Activated CD8-positive, alpha-beta memory T cell treated with anti-CD3 and anti-CD28 coated beads, Interleukin-2, amount 10 ng/mL, durations not matched to agents 7 days and 5 days (primary cell): ENCODE measurements at regions of chr17 and their contacts with region 1.

Region 1: GRCh38 chr17:82022981-82023374 is at the start of gene LRRC45:
- DNase-seq: peak; percentile 100
- ATAC-seq: peak; percentile 95
- H3K4me3 Mint-ChIP-seq: peak within 1 kb of the TSS; percentile 82
- H3K27ac Mint-ChIP-seq: peak within 1 kb of the TSS; percentile 78
- H3K4me1 Mint-ChIP-seq: peaks cover 32% of the 10 kb centered on the region
- H3K27me3 Mint-ChIP-seq: no peaks in the 10 kb centered on the region
- total RNA-seq, gene LRRC45: 45.4 to 61.6 TPM

Region 2: DNA sequence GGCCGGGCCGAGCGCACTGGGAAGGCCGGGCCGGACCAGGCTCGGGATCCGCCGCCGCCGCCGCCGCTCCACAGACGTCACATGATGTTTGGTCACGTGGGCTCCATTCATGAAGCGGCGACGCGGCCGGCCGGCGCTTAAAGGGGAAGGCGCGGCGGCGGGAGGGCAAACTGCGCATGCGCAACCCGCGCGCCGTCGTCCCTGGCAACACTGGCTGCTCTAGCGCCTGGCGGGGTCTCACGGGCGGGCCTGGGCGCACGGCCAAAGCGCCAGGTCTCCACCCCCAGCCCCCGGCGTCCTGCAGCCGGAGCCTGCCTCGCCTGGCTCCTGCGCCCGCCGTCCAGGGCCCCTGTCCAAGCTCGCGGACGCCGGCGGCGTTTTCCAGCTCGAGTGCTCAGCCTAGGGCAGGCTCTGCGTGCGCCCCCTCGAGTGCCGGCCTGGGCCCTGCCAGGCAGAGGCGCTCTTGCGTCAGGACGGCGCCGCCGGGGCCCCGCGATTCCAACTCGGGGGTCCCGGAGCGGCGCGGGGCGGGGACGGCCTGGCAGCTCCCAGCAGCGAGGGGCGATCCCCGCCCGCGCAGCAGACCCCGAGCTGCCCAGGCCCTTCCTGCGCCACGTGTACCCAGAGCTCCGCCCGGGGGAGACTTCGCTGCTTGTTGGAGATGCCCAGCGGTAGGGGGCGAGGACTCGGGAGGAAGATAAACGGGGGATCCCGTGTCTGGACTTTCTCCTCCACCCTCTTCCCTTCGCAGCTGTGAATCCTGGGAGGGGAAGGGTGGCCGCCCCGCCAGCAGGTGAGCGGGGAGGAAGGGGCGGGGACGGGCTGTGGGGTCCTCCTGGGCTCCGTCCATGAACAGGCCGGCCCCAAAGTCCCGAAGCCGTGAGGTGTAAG is 95.1 kb before region 1 on chr17 and contains the start of gene MAFG:
- CTCF ChIA-PET with region 1: interaction called, 10 read pairs
- DNase-seq: peak; percentile 93
- ATAC-seq: peak; percentile 76
- H3K4me3 Mint-ChIP-seq: peak within 1 kb of the TSS; percentile 79
- H3K27ac Mint-ChIP-seq: peak within 1 kb of the TSS; percentile 85
- H3K4me1 Mint-ChIP-seq: peaks cover 28% of the 10 kb centered on the region
- H3K27me3 Mint-ChIP-seq: peaks cover 2% of the 10 kb centered on the region
- total RNA-seq, gene MAFG: 20.2 to 23.8 TPM

Region 3: GRCh38 chr17:81959362-81960129 is 63.4 kb before region 1 on chr17:
- CTCF ChIA-PET with region 1: interaction called, 181 read pairs
- DNase-seq: peak; percentile 75
- ATAC-seq: peak; percentile 96
- H3K4me3 Mint-ChIP-seq: no peak overlapping the region
- H3K27ac Mint-ChIP-seq: no peak overlapping the region
- H3K4me1 Mint-ChIP-seq: no peaks in the 10 kb centered on the region
- H3K27me3 Mint-ChIP-seq: peaks cover 41% of the 10 kb centered on the region

Region 4: DNA sequence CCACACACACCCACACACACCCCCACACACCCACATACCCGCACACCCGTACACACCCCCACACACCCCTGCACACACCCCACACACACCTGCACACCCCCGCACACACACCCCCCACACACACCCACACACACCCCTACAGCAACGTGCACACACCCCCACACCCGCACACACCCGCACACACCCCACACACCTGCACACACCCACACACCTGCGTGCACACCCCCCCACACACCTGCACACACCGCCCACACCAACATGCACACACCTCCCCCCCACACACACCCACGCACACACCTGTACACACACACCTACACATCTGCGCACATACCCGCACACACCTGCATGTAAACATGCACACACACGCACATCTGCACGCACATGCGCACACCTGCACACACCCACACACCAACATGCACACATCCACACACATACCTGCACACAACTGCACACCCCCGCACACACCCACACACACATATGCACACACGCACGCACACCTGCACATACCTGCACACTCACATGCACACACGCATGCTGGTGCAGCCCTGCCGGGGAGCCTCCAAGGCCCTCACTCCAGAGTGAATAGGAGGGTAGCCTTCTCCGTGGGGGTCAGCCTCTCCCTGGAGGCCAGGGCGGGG is 38.1 kb before region 1 on chr17:
- CTCF ChIA-PET with region 1: interaction called, 10 read pairs
- DNase-seq: no peak
- ATAC-seq: no peak
- H3K4me3 Mint-ChIP-seq: no peak overlapping the region
- H3K27ac Mint-ChIP-seq: no peak overlapping the region
- H3K4me1 Mint-ChIP-seq: peaks cover 13% of the 10 kb centered on the region
- H3K27me3 Mint-ChIP-seq: no peaks in the 10 kb centered on the region

Region 5: GRCh38 chr17:82037113-82037888 is 14.3 kb after region 1 on chr17 and contains the start of gene DCXR:
- CTCF ChIA-PET with region 1: interaction called, 18 read pairs
- DNase-seq: peak; percentile 98
- ATAC-seq: peak; percentile 95
- H3K4me3 Mint-ChIP-seq: peak within 1 kb of the TSS; percentile 74
- H3K27ac Mint-ChIP-seq: peak within 1 kb of the TSS; percentile 91
- H3K4me1 Mint-ChIP-seq: peaks cover 24% of the 10 kb centered on the region
- H3K27me3 Mint-ChIP-seq: no peaks in the 10 kb centered on the region
- total RNA-seq, gene DCXR: 120 to 124 TPM

Region 6: DNA sequence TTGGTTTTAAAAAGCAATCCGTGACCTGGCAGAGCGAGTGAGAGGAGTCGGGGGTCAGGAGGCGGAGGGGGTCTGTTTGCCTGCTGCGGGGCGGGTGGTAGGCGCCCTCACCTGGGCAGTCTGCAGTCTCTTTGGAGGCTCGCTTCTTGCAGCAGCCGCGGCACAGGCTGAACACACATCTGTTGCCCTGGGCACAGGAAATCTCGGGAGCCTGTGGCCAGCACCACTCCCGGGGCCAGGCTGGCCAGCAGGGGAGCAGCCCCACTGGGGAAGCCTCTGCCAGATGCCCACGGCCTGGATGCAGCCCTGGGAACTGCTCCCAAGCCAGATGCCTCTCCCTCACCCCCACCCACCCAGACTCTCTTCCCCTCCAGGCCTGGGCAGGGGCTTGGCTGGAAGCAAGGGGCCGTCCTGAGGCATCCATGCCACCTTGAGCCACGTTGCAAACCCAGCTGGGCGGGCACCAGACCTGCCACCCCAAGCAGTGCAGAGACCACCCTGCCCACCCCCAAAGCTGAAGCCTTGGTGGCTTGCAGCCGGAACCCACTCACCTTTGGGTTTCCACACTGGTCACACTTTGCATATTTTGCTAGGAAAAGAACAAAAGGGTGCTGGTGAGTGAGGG is 35.4 kb after region 1 on chr17:
- CTCF ChIA-PET with region 1: no interaction called
- DNase-seq: no peak
- ATAC-seq: no peak
- H3K4me3 Mint-ChIP-seq: no peak overlapping the region
- H3K27ac Mint-ChIP-seq: no peak overlapping the region
- H3K4me1 Mint-ChIP-seq: peaks cover 11% of the 10 kb centered on the region
- H3K27me3 Mint-ChIP-seq: no peaks in the 10 kb centered on the region